Endothelial cell of umbilical vein (primary cell): ENCODE measurements at regions of chrX and their contacts with region 1.

Region 1: GRCh38 chrX:47523297-47523696 is 37.7 kb upstream of the ARAF start:
- DNase-seq: peak; percentile 72
- H3K4me3 ChIP-seq: peak overlapping the region in 2 of 3 experiments; percentile 56 to 66
- H3K27ac ChIP-seq: no peak overlapping the region
- H3K4me1 ChIP-seq: peaks cover under 1% of the 10 kb centered on the region
- H3K27me3 ChIP-seq: no peaks in the 10 kb centered on the region
- CTCF ChIP-seq: peak; percentile 60 to 87
- POLR2A ChIP-seq: no peak

Region 2: GRCh38 chrX:47384502-47384901 is 138.8 kb before region 1 on chrX:
- CTCF ChIA-PET with region 1: interaction called, 26 read pairs
- POLR2A ChIA-PET with region 1: interaction called, 3 read pairs
- dilution Hi-C with region 1: no loop called
- intact Hi-C with region 1: no loop called
- DNase-seq: peak; percentile 57
- H3K4me3 ChIP-seq: no peak overlapping the region
- H3K27ac ChIP-seq: no peak overlapping the region
- H3K4me1 ChIP-seq: no peaks in the 10 kb centered on the region
- H3K27me3 ChIP-seq: no peaks in the 10 kb centered on the region
- CTCF ChIP-seq: peak; percentile 46 to 51
- POLR2A ChIP-seq: no peak

Region 3: DNA sequence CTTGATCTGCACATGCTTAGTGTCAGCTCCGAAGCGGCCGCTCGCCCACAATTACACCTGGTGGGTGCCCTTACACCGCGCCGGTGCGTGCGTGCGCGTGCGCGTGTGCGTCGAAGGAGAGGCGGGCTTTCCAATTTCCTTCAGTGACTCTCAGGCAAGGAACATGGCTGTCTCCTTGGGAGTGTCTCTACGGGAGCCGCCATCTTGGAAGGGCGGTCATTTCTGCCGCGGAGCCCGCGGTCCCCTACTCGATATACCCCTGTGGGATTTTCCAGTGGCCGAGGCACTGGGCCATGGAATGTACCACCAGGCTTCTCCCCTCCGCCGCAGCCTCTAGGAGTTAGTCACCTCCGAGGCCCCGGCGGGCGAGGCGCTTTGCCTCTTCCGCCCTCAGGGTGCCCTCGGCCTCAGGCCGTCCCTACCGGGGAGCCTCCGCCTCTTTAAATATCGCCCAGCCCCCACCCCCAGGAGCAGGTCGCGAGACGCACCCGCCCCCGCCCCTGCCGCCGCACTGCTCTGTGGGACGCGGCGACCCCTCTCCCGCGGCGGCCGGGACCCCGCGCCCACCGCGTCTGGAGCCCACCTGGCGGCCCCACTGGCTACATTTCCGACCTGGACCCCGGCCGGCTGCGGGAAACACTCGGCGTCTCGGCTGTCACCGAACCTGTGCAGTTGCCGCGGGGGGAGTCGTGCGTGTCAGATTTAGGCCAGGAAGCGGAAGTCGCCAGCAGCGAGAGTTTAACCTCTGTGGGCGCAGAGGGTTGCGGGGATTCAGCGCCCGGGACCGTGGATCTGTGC is 40.6 kb before region 1 on chrX and contains the start of gene ZNF41:
- CTCF ChIA-PET with region 1: interaction called, 4 read pairs
- POLR2A ChIA-PET with region 1: no interaction called
- dilution Hi-C with region 1: no loop called
- intact Hi-C with region 1: loop called (anchors 5 kb)
- DNase-seq: peak; percentile 84
- H3K4me3 ChIP-seq: peak within 1 kb of the TSS; percentile 54 to 92 (median 82)
- H3K27ac ChIP-seq: peak within 1 kb of the TSS; percentile 85
- H3K4me1 ChIP-seq: peaks cover 9% of the 10 kb centered on the region
- H3K27me3 ChIP-seq: no peaks in the 10 kb centered on the region
- CTCF ChIP-seq: no peak
- POLR2A ChIP-seq: peak; percentile 17
- total RNA-seq, gene ZNF41: 7.5 TPM in 2 replicates

Region 4: DNA sequence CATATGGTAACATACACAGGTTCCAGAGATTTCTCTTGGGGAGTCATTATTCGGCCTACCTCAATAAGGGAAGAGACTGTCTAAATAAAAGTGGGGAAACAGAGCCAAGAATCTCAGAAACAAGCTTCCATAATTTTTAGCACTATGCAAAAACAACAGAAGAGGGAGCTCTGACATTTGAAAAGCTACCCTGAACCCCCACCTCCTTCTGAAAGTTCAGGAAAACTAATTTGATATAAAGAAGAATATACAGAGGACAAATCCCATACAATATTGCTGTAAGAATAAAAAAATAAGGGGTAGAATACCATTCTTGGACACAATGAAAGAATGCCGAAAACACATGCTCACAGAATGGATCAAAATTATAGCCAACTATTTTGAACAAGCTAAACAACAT is 26.0 kb before region 1 on chrX:
- CTCF ChIA-PET with region 1: interaction called, 101 read pairs
- POLR2A ChIA-PET with region 1: no interaction called
- dilution Hi-C with region 1: no loop called
- intact Hi-C with region 1: loop called (anchors 1 kb)
- DNase-seq: peak; percentile 13
- H3K4me3 ChIP-seq: no peak overlapping the region
- H3K27ac ChIP-seq: no peak overlapping the region
- H3K4me1 ChIP-seq: no peaks in the 10 kb centered on the region
- H3K27me3 ChIP-seq: peaks cover 0 to 2% of the 10 kb centered on the region in 2 experiments
- CTCF ChIP-seq: peak in 1 of 2 donors; percentile 11
- POLR2A ChIP-seq: no peak